ENCODE measurements at regions of chr14 and their contacts with region 1.

Region 1: GRCh38 chr14:103292426-103293374 is 41.3 kb upstream of the EIF5 start:
- DNase-seq: peak; percentile 71 to 79
- ATAC-seq: peak; percentile 91 to 96
- H3K4me3 ChIP-seq: no peak overlapping the region
- H3K27ac ChIP-seq: peak overlapping the region; percentile 44 to 60; a peak in 5 of 6 replicates
- H3K4me1 ChIP-seq: peaks cover 11% of the 10 kb centered on the region; the same call in 1 of the 3 replicates
- CTCF ChIP-seq: peak; percentile 95
- EP300 ChIP-seq: no peak
- POLR2A ChIP-seq: no peak
- RAD21 ChIP-seq: peak; percentile 98 to 99

Region 2: GRCh38 chr14:103091041-103091882 is 201.4 kb before region 1 on chr14:
- CTCF ChIA-PET with region 1: interaction called, 23 read pairs
- POLR2A ChIA-PET with region 1: no interaction called
- DNase-seq: peak in 1 of 2 experiments; percentile 88
- ATAC-seq: peak; percentile 76 to 80
- H3K4me3 ChIP-seq: peak overlapping the region; percentile 52
- H3K27ac ChIP-seq: peak overlapping the region; percentile 88 to 98
- H3K4me1 ChIP-seq: peaks cover 21% of the 10 kb centered on the region
- CTCF ChIP-seq: peak; percentile 67
- EP300 ChIP-seq: no peak
- POLR2A ChIP-seq: no peak; the same call in 1 of the 2 replicates
- RAD21 ChIP-seq: peak; percentile 22 to 69; a peak in 4 of 5 replicates

Region 3: GRCh38 chr14:103141119-103141796 is 151.4 kb before region 1 on chr14:
- CTCF ChIA-PET with region 1: interaction called, 62 read pairs
- POLR2A ChIA-PET with region 1: no interaction called
- DNase-seq: peak; percentile 71 to 78
- ATAC-seq: peak in 1 of 2 experiments; percentile 13; a peak in 3 of 6 replicates
- H3K4me3 ChIP-seq: no peak overlapping the region
- H3K27ac ChIP-seq: peak overlapping the region; percentile 16 to 81; a peak in 5 of 6 replicates
- H3K4me1 ChIP-seq: peaks cover 62% of the 10 kb centered on the region
- CTCF ChIP-seq: peak; percentile 71
- EP300 ChIP-seq: no peak
- POLR2A ChIP-seq: no peak
- RAD21 ChIP-seq: peak; percentile 63 to 68

Region 4: DNA sequence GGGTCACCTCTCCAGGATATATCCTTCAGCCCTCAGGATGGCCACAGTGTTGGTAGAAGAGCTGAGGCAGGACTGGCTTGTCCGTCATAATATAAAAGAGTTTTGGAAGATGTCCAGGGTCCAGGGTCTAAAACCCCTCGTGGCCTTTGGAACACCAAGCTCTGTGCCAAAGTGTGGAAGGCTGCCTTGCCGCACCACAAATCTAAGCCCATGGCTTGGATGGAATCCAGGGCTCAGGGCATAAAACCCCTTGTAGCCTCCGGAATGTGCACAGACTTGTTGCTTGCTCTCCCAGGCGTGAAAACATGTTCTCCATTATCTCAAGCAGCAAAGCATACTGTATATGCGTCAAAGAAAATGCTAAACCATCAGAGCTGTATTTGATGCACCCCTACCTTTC is 122.7 kb before region 1 on chr14:
- CTCF ChIA-PET with region 1: interaction called, 16 read pairs
- POLR2A ChIA-PET with region 1: no interaction called
- DNase-seq: no peak
- ATAC-seq: no peak
- H3K4me3 ChIP-seq: no peak overlapping the region
- H3K27ac ChIP-seq: no peak overlapping the region
- H3K4me1 ChIP-seq: no peaks in the 10 kb centered on the region
- CTCF ChIP-seq: no peak
- EP300 ChIP-seq: no peak
- POLR2A ChIP-seq: no peak
- RAD21 ChIP-seq: no peak

Region 5: GRCh38 chr14:103199124-103199523 is 93.6 kb before region 1 on chr14:
- CTCF ChIA-PET with region 1: interaction called, 13 read pairs
- POLR2A ChIA-PET with region 1: no interaction called
- DNase-seq: peak in 1 of 2 experiments; percentile 42
- ATAC-seq: peak; percentile 44 to 60; a peak in 5 of 6 replicates
- H3K4me3 ChIP-seq: no peak overlapping the region
- H3K27ac ChIP-seq: peak overlapping the region; percentile 67 to 85
- H3K4me1 ChIP-seq: peaks cover 23% of the 10 kb centered on the region
- CTCF ChIP-seq: no peak
- EP300 ChIP-seq: 0 out of 5 replicates have a peak, but pooled peaks of 1 of the 2 experiments have one; percentile 6
- POLR2A ChIP-seq: no peak
- RAD21 ChIP-seq: no peak

Region 6: GRCh38 chr14:103260620-103261124 is 32.0 kb before region 1 on chr14:
- CTCF ChIA-PET with region 1: interaction called, 13 read pairs
- POLR2A ChIA-PET with region 1: no interaction called
- DNase-seq: peak; percentile 40 to 51
- ATAC-seq: peak; percentile 65 to 81; a peak in 5 of 6 replicates
- H3K4me3 ChIP-seq: peak overlapping the region; percentile 45
- H3K27ac ChIP-seq: peak overlapping the region; percentile 85 to 91
- H3K4me1 ChIP-seq: peaks cover 33% of the 10 kb centered on the region
- CTCF ChIP-seq: no peak
- EP300 ChIP-seq: no peak
- POLR2A ChIP-seq: 0 out of 2 replicates have a peak, but pooled peaks have one; percentile 11
- RAD21 ChIP-seq: no peak

Region 7: GRCh38 chr14:103311171-103311997 is 18.7 kb after region 1 on chr14:
- CTCF ChIA-PET with region 1: interaction called, 26 read pairs
- POLR2A ChIA-PET with region 1: no interaction called
- DNase-seq: no peak
- ATAC-seq: no peak
- H3K4me3 ChIP-seq: no peak overlapping the region
- H3K27ac ChIP-seq: no peak overlapping the region
- H3K4me1 ChIP-seq: no peaks in the 10 kb centered on the region
- CTCF ChIP-seq: no peak
- EP300 ChIP-seq: no peak
- POLR2A ChIP-seq: no peak
- RAD21 ChIP-seq: no peak